ENCODE measurements at regions of chr15 and their contacts with region 1.

Region 1: GRCh38 chr15:99631255-99631654 is 65.5 kb downstream of the MEF2A start:
- DNase-seq: peak; percentile 83
- ATAC-seq: peak; percentile 96
- H3K4me3 ChIP-seq: peak overlapping the region in 3 of 5 experiments; percentile 6 to 32 (median 7)
- H3K4me3 Mint-ChIP-seq: peak overlapping the region; percentile 80
- H3K27ac ChIP-seq: peak overlapping the region; percentile 78 to 91
- H3K27ac Mint-ChIP-seq: peak overlapping the region; percentile 90
- H3K4me1 ChIP-seq: peaks cover 33 to 36% of the 10 kb centered on the region in 2 donors
- H3K4me1 Mint-ChIP-seq: peaks cover 63% of the 10 kb centered on the region
- H3K27me3 ChIP-seq: no peaks in the 10 kb centered on the region
- H3K27me3 Mint-ChIP-seq: no peaks in the 10 kb centered on the region
- CTCF ChIP-seq: no peak

Region 2: DNA sequence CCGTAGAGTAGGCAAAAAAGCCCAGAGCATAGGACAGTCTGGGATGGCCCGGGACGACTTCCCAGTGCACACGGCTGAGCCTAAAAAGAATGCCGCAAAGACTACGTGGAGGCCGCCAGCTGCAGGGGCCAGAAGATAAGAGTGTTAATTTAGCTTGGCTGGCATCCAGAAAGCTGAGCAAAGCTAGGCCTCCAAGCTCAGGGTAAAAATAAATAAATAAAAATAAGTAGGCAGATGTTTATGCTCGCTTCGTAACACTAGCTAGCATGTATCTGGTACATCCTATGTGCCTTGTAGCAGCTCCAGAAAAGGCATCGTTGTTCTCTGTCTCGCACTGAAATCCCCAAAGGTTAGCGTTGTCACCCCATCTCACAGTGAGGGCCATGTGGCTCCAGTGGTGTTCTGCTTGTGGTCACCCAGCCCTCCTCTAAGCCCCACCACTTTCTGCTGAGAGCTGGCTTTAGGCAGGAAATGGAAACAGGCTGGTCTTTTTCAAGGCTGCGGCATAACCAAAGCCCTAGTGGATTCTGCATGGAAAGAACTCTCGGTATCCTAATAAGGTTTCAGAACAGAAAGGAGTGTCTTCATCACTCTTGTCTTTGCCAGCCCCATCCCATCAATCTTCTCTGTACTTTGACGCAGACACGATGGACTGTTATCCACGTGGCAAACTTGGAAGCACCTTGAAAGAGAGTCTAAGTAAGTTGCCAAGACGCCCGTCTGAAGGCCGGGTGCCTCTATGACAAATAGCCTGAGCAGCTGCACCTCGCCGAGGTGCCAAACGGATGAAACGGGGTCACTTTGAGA is 123.5 kb before region 1 on chr15:
- CTCF ChIA-PET with region 1: interaction called, 3 read pairs
- POLR2A ChIA-PET with region 1: no interaction called
- intact Hi-C with region 1: loop called (anchors 2 kb)
- DNase-seq: peak; percentile 47
- ATAC-seq: no peak
- H3K4me3 ChIP-seq: peak overlapping the region in 1 of 5 experiments; percentile 5
- H3K4me3 Mint-ChIP-seq: peak overlapping the region; percentile 79
- H3K27ac ChIP-seq: peak overlapping the region; percentile 50 to 90
- H3K27ac Mint-ChIP-seq: peak overlapping the region; percentile 86
- H3K4me1 ChIP-seq: peaks cover 87 to 88% of the 10 kb centered on the region in 2 donors
- H3K4me1 Mint-ChIP-seq: peaks cover 91% of the 10 kb centered on the region
- H3K27me3 ChIP-seq: no peaks in the 10 kb centered on the region
- H3K27me3 Mint-ChIP-seq: no peaks in the 10 kb centered on the region
- CTCF ChIP-seq: no peak

Region 3: GRCh38 chr15:99578809-99579208 is 52.4 kb before region 1 on chr15:
- CTCF ChIA-PET with region 1: no interaction called
- POLR2A ChIA-PET with region 1: no interaction called
- intact Hi-C with region 1: loop called (anchors 5 kb)
- DNase-seq: no peak
- ATAC-seq: peak; percentile 24
- H3K4me3 ChIP-seq: no peak overlapping the region
- H3K4me3 Mint-ChIP-seq: no peak overlapping the region
- H3K27ac ChIP-seq: no peak overlapping the region
- H3K27ac Mint-ChIP-seq: no peak overlapping the region
- H3K4me1 ChIP-seq: peaks cover 26 to 57% of the 10 kb centered on the region in 2 donors
- H3K4me1 Mint-ChIP-seq: peaks cover 76% of the 10 kb centered on the region
- H3K27me3 ChIP-seq: no peaks in the 10 kb centered on the region
- H3K27me3 Mint-ChIP-seq: no peaks in the 10 kb centered on the region
- CTCF ChIP-seq: no peak

Region 4: DNA sequence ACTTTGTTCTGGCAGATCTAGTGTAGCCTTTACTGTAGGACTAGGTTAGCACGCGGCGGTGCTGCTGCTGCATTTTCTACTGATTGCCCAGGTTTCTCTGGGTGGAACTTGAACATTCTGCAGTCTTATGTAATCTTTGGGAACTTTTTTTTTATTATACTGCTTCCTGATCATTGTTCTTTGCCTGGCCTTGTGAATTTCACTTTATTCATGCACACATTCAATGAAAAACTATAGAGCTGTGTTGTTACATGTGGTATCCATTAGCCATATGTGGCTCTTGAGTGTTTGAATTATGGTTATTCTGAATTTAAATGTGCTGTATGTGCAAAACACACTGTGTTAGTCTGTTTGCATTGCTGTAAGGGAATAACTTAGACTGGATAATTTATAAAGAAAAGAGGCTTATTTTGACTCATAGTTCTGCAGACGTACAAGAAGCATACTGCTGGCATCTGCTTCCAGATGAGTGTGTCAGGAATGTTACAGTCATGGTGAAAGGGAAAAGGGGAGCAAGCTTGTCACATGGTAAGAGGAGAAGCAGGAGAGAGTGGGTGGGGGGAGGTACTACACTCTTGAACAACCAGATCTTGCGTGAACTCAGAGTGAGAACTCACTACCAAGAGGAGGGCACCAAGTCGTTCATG is 39.0 kb before region 1 on chr15:
- CTCF ChIA-PET with region 1: no interaction called
- POLR2A ChIA-PET with region 1: no interaction called
- intact Hi-C with region 1: loop called (anchors 5 kb)
- DNase-seq: no peak
- ATAC-seq: no peak
- H3K4me3 ChIP-seq: no peak overlapping the region
- H3K4me3 Mint-ChIP-seq: no peak overlapping the region
- H3K27ac ChIP-seq: no peak overlapping the region
- H3K27ac Mint-ChIP-seq: no peak overlapping the region
- H3K4me1 ChIP-seq: peaks cover 12 to 32% of the 10 kb centered on the region in 2 donors
- H3K4me1 Mint-ChIP-seq: peaks cover 60% of the 10 kb centered on the region
- H3K27me3 ChIP-seq: no peaks in the 10 kb centered on the region
- H3K27me3 Mint-ChIP-seq: no peaks in the 10 kb centered on the region
- CTCF ChIP-seq: no peak

Region 5: DNA sequence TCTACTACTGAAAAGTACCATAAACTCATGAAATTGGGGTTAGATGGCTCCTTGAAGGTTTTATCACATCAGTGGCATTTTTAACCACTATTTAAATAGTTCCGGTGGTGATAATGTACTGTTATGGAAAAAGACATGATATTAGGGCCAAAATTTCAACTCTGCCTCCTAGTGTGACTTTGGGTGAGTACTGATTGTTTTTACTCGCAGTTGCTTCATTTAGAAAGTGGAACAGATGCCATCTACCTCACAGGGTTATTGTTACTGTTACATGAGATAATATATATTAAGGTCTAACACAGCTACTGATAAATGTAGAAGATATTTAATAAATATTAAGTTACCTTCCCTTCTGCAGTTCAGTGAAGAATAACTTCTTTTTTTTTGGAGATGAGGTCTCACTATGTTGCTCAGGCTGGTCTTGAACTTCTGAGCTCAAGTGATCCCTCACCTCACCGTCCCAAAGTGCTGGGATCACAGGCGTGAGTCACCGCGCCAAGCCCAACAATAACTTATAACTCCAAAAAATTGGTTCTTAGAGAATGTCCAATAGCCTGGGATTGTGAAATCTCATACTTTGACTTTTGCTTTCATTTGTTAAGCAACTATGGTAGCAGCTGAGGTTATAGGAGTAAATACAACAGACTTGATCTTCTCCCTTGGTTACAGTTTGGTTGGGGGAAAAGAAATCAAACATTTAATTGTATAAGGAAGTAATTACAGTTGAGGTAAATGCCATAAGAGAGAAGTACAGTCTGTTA is 17.2 kb before region 1 on chr15:
- CTCF ChIA-PET with region 1: no interaction called
- POLR2A ChIA-PET with region 1: interaction called, 3 read pairs
- intact Hi-C with region 1: loop called (anchors 2 kb)
- DNase-seq: no peak
- ATAC-seq: peak; percentile 37
- H3K4me3 ChIP-seq: no peak overlapping the region
- H3K4me3 Mint-ChIP-seq: peak overlapping the region; percentile 38
- H3K27ac ChIP-seq: peak overlapping the region; percentile 52 to 83
- H3K27ac Mint-ChIP-seq: peak overlapping the region; percentile 34
- H3K4me1 ChIP-seq: peaks cover 30 to 41% of the 10 kb centered on the region in 2 donors
- H3K4me1 Mint-ChIP-seq: peaks cover 64% of the 10 kb centered on the region
- H3K27me3 ChIP-seq: no peaks in the 10 kb centered on the region
- H3K27me3 Mint-ChIP-seq: no peaks in the 10 kb centered on the region
- CTCF ChIP-seq: no peak

Region 6: GRCh38 chr15:99651023-99651807 is 20.0 kb after region 1 on chr15:
- CTCF ChIA-PET with region 1: no interaction called
- POLR2A ChIA-PET with region 1: no interaction called
- intact Hi-C with region 1: no loop called
- DNase-seq: no peak
- ATAC-seq: no peak
- H3K4me3 ChIP-seq: no peak overlapping the region
- H3K4me3 Mint-ChIP-seq: no peak overlapping the region
- H3K27ac ChIP-seq: no peak overlapping the region
- H3K27ac Mint-ChIP-seq: peak overlapping the region; percentile 15
- H3K4me1 ChIP-seq: no peaks in the 10 kb centered on the region
- H3K4me1 Mint-ChIP-seq: peaks cover 10% of the 10 kb centered on the region
- H3K27me3 ChIP-seq: no peaks in the 10 kb centered on the region
- H3K27me3 Mint-ChIP-seq: no peaks in the 10 kb centered on the region
- CTCF ChIP-seq: no peak

Region 7: DNA sequence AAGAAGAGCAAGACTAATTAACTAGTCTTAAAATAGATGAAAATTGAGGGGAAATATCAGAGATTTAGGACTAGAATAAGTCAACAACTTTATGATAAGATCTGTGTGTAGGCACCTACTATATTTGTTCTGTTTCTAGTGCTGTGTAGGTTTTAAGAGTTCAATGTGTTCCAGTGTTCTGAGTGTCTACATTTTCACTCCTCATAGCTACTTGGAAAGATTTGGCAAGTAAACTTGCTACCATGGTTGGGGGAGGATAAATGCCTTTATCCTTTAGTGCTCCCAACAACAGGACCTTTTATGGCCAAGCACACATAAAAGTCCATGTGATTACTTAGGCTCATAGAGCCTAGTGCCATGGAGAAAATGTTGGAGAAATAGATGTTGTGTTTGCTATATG is 38.0 kb after region 1 on chr15:
- CTCF ChIA-PET with region 1: no interaction called
- POLR2A ChIA-PET with region 1: no interaction called
- intact Hi-C with region 1: loop called (anchors 5 kb)
- DNase-seq: no peak
- ATAC-seq: no peak
- H3K4me3 ChIP-seq: no peak overlapping the region
- H3K4me3 Mint-ChIP-seq: no peak overlapping the region
- H3K27ac ChIP-seq: peak overlapping the region in 1 of 2 donors; percentile 2
- H3K27ac Mint-ChIP-seq: no peak overlapping the region
- H3K4me1 ChIP-seq: no peaks in the 10 kb centered on the region
- H3K4me1 Mint-ChIP-seq: peaks cover 1% of the 10 kb centered on the region
- H3K27me3 ChIP-seq: no peaks in the 10 kb centered on the region
- H3K27me3 Mint-ChIP-seq: no peaks in the 10 kb centered on the region
- CTCF ChIP-seq: no peak

Measured in B cell (primary cell).